ENCODE measurements at regions of chr15 and their contacts with region 1.

Region 1: DNA sequence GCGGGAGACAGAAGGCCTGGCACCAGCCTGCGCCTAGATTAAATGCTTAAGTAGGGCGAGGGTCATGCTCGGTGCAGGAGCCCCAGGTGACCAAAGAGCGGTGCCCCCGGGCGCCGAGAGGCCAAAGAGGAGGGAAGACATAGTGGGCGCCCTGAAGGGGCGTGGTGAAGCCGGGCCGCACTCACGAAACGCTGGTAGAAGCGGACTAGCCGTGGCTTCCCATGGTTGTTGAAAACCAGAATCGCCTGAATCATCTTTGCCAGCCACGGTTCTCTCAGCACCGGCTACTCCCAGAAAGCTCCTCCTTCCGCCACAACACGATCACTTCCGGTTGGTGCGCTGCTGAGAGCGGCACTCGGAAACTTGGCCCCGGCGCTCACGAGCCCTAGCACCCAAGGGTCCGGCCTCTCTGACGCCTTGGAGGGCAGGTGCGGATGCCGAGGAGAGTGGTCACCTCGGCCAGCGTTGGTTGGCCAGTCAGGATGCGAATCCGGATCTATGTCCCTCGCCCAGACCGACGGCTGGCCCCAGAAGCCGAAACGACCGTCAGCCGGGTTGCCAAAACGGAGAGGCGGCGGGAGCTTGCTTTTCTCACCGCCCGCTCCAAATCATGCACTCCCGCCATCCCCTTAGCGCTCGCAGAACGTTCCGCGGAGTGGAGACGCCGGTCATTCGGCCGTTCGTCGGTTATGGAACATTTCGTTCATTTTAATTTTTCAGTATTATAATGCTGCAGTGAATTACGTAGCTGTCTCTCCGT is at the start of gene AP3S2:
- DNase-seq: peak; percentile 78 to 93 (median 88)
- ATAC-seq: peak; percentile 92
- H3K4me3 ChIP-seq: peak within 1 kb of the TSS; percentile 80 to 91
- H3K4me3 Mint-ChIP-seq: peak within 1 kb of the TSS; percentile 93
- H3K27ac ChIP-seq: peak within 1 kb of the TSS; percentile 73 to 75
- H3K27ac Mint-ChIP-seq: peak within 1 kb of the TSS; percentile 95
- H3K4me1 ChIP-seq: peaks cover 18% of the 10 kb centered on the region
- H3K4me1 Mint-ChIP-seq: peaks cover 30% of the 10 kb centered on the region
- H3K27me3 ChIP-seq: no peaks in the 10 kb centered on the region
- H3K27me3 Mint-ChIP-seq: no peaks in the 10 kb centered on the region
- CTCF ChIP-seq: no peak
- total RNA-seq, gene AP3S2: 14.2 to 16.0 TPM

Region 2: GRCh38 chr15:89243691-89244471 is 650.0 kb before region 1 on chr15 and contains the start of gene FANCI:
- CTCF ChIA-PET with region 1: no interaction called
- POLR2A ChIA-PET with region 1: no interaction called
- intact Hi-C with region 1: loop called in 1 of 2 experiments (anchors 5 kb)
- DNase-seq: peak; percentile 93 to 98 (median 97)
- ATAC-seq: peak; percentile 98
- H3K4me3 ChIP-seq: peak within 1 kb of the TSS; percentile 77 to 85
- H3K4me3 Mint-ChIP-seq: peak within 1 kb of the TSS; percentile 95
- H3K27ac ChIP-seq: peak within 1 kb of the TSS; percentile 24 to 52
- H3K27ac Mint-ChIP-seq: peak within 1 kb of the TSS; percentile 90
- H3K4me1 ChIP-seq: peaks cover 15% of the 10 kb centered on the region
- H3K4me1 Mint-ChIP-seq: peaks cover 25% of the 10 kb centered on the region
- H3K27me3 ChIP-seq: no peaks in the 10 kb centered on the region
- H3K27me3 Mint-ChIP-seq: no peaks in the 10 kb centered on the region
- CTCF ChIP-seq: no peak
- total RNA-seq, gene FANCI: 5.1 to 6.3 TPM

Region 3: GRCh38 chr15:89874926-89875564 is 18.8 kb before region 1 on chr15:
- CTCF ChIA-PET with region 1: interaction called, 72 read pairs
- POLR2A ChIA-PET with region 1: interaction called, 13 read pairs
- intact Hi-C with region 1: loop called in 1 of 2 experiments (anchors 2 kb)
- DNase-seq: peak; percentile 60 to 88 (median 82)
- ATAC-seq: peak; percentile 100
- H3K4me3 ChIP-seq: no peak overlapping the region
- H3K4me3 Mint-ChIP-seq: no peak overlapping the region
- H3K27ac ChIP-seq: no peak overlapping the region
- H3K27ac Mint-ChIP-seq: no peak overlapping the region
- H3K4me1 ChIP-seq: no peaks in the 10 kb centered on the region
- H3K4me1 Mint-ChIP-seq: peaks cover 8% of the 10 kb centered on the region
- H3K27me3 ChIP-seq: no peaks in the 10 kb centered on the region
- H3K27me3 Mint-ChIP-seq: no peaks in the 10 kb centered on the region
- CTCF ChIP-seq: peak; percentile 98

Region 4: GRCh38 chr15:90071208-90071807 is 177.4 kb after region 1 on chr15:
- CTCF ChIA-PET with region 1: interaction called, 78 read pairs
- POLR2A ChIA-PET with region 1: interaction called, 4 read pairs
- intact Hi-C with region 1: loop called (anchors 1 kb)
- DNase-seq: peak; percentile 54 to 87 (median 83)
- ATAC-seq: peak; percentile 99
- H3K4me3 ChIP-seq: no peak overlapping the region
- H3K4me3 Mint-ChIP-seq: no peak overlapping the region
- H3K27ac ChIP-seq: no peak overlapping the region
- H3K27ac Mint-ChIP-seq: no peak overlapping the region
- H3K4me1 ChIP-seq: no peaks in the 10 kb centered on the region
- H3K4me1 Mint-ChIP-seq: peaks cover 7% of the 10 kb centered on the region
- H3K27me3 ChIP-seq: no peaks in the 10 kb centered on the region
- H3K27me3 Mint-ChIP-seq: no peaks in the 10 kb centered on the region
- CTCF ChIP-seq: peak; percentile 81

Region 5: GRCh38 chr15:90086868-90087268 is 193.0 kb after region 1 on chr15:
- CTCF ChIA-PET with region 1: interaction called, 5 read pairs
- POLR2A ChIA-PET with region 1: no interaction called
- intact Hi-C with region 1: loop called in 1 of 2 experiments (anchors 5 kb)
- DNase-seq: peak in 8 of 9 experiments; percentile 27 to 64 (median 48)
- ATAC-seq: peak; percentile 91
- H3K4me3 ChIP-seq: no peak overlapping the region
- H3K4me3 Mint-ChIP-seq: no peak overlapping the region
- H3K27ac ChIP-seq: no peak overlapping the region
- H3K27ac Mint-ChIP-seq: peak overlapping the region; percentile 70
- H3K4me1 ChIP-seq: no peaks in the 10 kb centered on the region
- H3K4me1 Mint-ChIP-seq: peaks cover 4% of the 10 kb centered on the region
- H3K27me3 ChIP-seq: no peaks in the 10 kb centered on the region
- H3K27me3 Mint-ChIP-seq: no peaks in the 10 kb centered on the region
- CTCF ChIP-seq: peak; percentile 59

Region 6: DNA sequence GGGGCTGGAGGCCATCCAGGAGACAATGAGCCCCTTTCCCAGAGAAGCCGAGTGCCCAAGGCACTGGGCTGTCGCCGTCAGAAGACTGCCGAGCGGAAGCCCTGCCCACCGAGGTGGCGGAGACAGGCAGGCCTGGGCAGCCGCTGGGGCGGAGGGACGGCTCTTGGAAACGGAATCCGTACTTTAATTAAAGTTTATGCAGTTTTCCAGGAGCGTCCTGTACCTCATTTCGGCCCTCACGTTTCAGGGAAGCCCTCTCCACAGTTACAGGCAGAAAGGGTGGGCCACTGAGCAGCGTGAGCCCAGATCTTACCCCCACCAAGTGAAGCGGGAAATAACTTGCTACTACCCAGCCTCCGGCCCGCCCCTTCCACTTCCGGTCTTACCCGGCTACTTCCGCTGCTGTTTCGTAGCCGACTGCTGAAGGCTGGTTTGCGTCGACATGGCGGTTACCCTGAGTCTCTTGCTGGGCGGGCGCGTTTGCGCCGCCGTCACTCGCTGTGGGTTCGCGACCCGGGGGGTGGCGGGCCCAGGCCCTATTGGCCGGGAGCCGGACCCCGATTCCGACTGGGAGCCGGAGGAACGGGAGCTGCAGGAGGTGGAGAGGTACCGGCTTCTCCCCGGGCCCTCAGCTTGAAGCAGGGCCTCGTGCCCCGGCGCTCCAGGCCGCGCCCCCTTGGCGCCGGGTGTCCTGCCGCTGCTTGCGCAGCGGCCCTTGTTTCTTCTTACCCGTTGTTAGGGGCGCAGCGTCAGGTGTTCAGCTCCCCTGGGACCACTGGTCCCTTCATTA is 371.6 kb after region 1 on chr15 and contains the start of gene NGRN:
- CTCF ChIA-PET with region 1: no interaction called
- POLR2A ChIA-PET with region 1: no interaction called
- intact Hi-C with region 1: loop called in 1 of 2 experiments (anchors 10 kb)
- DNase-seq: peak; percentile 84 to 95 (median 93)
- ATAC-seq: peak; percentile 81
- H3K4me3 ChIP-seq: peak within 1 kb of the TSS; percentile 79 to 86
- H3K4me3 Mint-ChIP-seq: peak within 1 kb of the TSS; percentile 94
- H3K27ac ChIP-seq: peak within 1 kb of the TSS; percentile 95 to 98
- H3K27ac Mint-ChIP-seq: peak within 1 kb of the TSS; percentile 98
- H3K4me1 ChIP-seq: peaks cover 43% of the 10 kb centered on the region
- H3K4me1 Mint-ChIP-seq: peaks cover 51% of the 10 kb centered on the region
- H3K27me3 ChIP-seq: no peaks in the 10 kb centered on the region
- H3K27me3 Mint-ChIP-seq: no peaks in the 10 kb centered on the region
- CTCF ChIP-seq: no peak
- total RNA-seq, gene NGRN: 57.8 to 62.0 TPM

Measured in CD8-positive, alpha-beta T cell (primary cell).